ENCODE measurements at regions of chr9 and their contacts with region 1.

Region 1: DNA sequence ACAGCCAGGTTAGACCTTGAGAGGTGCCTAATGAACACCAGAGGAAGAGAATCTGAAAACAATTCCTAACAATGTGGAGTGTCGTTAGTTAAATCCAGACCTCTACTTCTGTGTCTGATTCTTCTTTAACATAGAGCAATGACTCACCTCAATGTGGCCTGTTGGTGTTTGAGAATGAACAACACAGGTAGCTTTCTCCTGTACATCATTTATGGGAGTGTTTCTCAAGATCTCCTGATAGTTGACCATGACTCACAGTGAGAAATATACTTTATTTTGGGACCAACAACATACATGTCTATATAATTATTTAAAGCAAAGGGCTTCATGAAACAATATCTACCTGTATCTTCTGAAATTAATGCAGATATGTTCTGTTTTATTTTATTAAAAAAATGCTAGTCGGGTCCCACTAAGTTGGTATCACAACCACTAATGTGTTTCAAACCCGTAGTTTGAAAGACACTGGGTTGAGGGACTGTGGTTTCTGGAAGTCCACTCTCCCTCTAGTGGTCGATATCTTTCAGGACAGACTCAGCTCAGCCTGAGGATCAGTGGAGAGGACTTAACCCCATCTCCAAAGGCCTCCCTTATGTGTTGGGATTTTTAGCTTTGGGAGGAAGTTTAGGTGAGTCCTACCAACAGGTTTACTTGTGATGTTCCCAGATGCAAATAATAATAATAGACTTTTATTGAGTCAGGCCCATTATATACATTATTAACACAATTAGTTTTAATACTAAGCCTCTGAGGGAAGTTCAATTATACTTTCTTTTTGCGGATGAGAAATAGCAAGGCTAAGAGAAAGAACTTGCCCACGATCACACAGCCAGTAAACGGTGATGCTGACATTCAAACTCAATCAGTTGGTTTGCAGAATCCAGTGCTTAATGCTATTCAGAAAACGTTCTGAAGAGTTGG is 70.0 kb upstream of the KLF9 start:
- DNase-seq: peak; percentile 86
- ATAC-seq: peak; percentile 69
- H3K4me3 ChIP-seq: no peak overlapping the region
- H3K27ac ChIP-seq: no peak overlapping the region
- H3K4me1 ChIP-seq: peaks cover 18% of the 10 kb centered on the region
- H3K27me3 ChIP-seq: no peaks in the 10 kb centered on the region
- CTCF ChIP-seq: peak; percentile 80
- POLR2A ChIP-seq: no peak
- RAD21 ChIP-seq: peak; percentile 78

Region 2: GRCh38 chr9:70291413-70291812 is 193.1 kb before region 1 on chr9:
- CTCF ChIA-PET with region 1: no interaction called
- POLR2A ChIA-PET with region 1: no interaction called
- dilution Hi-C with region 1: no loop called
- in situ Hi-C with region 1: no loop called
- intact Hi-C with region 1: no loop called
- DNase-seq: peak; percentile 28
- ATAC-seq: no peak
- H3K4me3 ChIP-seq: no peak overlapping the region
- H3K27ac ChIP-seq: no peak overlapping the region
- H3K4me1 ChIP-seq: peaks cover 9% of the 10 kb centered on the region
- H3K27me3 ChIP-seq: no peaks in the 10 kb centered on the region
- CTCF ChIP-seq: no peak
- POLR2A ChIP-seq: no peak
- RAD21 ChIP-seq: no peak

Region 3: DNA sequence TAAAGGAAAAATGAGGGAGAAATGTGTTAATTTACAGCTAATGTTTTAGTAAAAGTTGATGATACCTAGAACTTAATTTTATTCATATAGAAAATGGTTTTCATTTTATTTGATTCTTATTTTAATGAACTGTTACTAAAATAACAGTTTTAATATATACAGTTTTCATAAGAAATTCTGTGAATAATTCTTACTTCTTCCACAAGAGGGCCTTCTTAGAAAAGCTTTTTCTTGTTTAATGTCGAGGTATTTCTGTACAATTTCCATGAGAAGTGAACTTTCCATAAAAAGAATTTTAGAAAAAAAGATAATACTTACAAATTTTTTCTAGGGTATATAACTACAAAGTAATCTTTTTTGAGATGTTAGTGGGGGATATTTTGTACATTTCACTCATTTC is 143.9 kb before region 1 on chr9:
- CTCF ChIA-PET with region 1: no interaction called
- POLR2A ChIA-PET with region 1: no interaction called
- dilution Hi-C with region 1: no loop called
- in situ Hi-C with region 1: loop called (anchors 10 kb)
- intact Hi-C with region 1: loop called (anchors 5 kb)
- DNase-seq: peak; percentile 57
- ATAC-seq: no peak
- H3K4me3 ChIP-seq: no peak overlapping the region
- H3K27ac ChIP-seq: no peak overlapping the region
- H3K4me1 ChIP-seq: no peaks in the 10 kb centered on the region
- H3K27me3 ChIP-seq: no peaks in the 10 kb centered on the region
- CTCF ChIP-seq: peak; percentile 55
- POLR2A ChIP-seq: no peak
- RAD21 ChIP-seq: peak; percentile 63

Region 4: GRCh38 chr9:70352802-70353201 is 131.7 kb before region 1 on chr9:
- CTCF ChIA-PET with region 1: no interaction called
- POLR2A ChIA-PET with region 1: no interaction called
- dilution Hi-C with region 1: no loop called
- in situ Hi-C with region 1: loop called (anchors 10 kb)
- intact Hi-C with region 1: loop called (anchors 5 kb)
- DNase-seq: no peak
- ATAC-seq: no peak
- H3K4me3 ChIP-seq: no peak overlapping the region
- H3K27ac ChIP-seq: no peak overlapping the region
- H3K4me1 ChIP-seq: no peaks in the 10 kb centered on the region
- H3K27me3 ChIP-seq: no peaks in the 10 kb centered on the region
- CTCF ChIP-seq: 0 out of 2 replicates have a peak, but pooled peaks have one; percentile 24
- POLR2A ChIP-seq: no peak
- RAD21 ChIP-seq: peak; percentile 38; the same call in 1 of the 2 replicates

Region 5: DNA sequence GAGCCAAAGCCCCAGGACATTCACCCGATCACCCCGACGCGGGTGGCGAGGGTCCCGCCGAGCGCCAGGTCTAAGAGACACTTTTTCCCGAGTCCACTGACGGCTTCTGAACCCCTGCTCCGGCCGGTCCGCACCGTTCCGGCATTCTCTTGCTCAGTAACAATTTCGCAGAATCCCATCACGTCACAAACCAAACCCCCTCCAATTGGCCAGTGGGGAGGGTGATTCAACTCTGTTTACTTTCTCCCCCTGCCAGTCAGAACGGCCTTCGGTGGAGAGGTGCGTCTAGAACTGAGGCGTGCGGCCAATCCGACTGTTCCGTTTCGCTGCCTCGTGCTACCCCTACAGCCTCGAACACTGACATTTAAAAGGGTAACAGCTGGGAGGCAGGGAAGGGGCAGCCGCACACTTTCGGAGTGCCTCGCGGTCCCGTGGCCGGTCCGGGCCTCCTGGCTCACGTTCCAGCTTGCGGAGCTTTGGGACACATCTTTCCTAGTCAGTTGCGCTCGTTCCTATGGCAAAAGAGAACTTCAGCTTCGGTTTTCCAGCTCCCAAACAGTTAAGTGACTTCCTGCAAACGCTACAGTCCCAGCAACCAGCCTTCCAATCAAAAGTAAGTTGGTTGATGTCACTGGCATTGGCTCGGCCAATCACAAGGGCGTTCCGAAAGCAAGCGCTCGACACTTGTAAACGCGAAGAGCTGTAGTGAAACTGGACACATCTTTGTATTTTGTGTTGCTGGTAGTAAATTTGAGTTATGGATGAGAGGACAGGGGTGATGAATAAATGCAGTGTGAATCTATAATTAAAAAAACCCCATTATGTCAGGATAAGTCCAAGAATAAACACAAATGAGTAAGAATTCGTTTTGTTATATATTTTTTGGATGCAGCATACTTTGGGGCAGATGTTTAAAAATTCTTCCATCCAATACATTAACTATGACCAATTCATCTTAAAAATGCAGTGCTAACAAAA is 70.4 kb before region 1 on chr9 and contains the start of gene KLF9:
- CTCF ChIA-PET with region 1: interaction called, 7 read pairs
- POLR2A ChIA-PET with region 1: no interaction called
- dilution Hi-C with region 1: no loop called
- in situ Hi-C with region 1: loop called (anchors 5 kb)
- intact Hi-C with region 1: loop called (anchors 5 kb)
- DNase-seq: peak; percentile 97
- ATAC-seq: peak; percentile 83
- H3K4me3 ChIP-seq: peak within 1 kb of the TSS; percentile 85
- H3K27ac ChIP-seq: peak within 1 kb of the TSS; percentile 92
- H3K4me1 ChIP-seq: peaks cover 7% of the 10 kb centered on the region
- H3K27me3 ChIP-seq: no peaks in the 10 kb centered on the region
- CTCF ChIP-seq: 0 out of 2 replicates have a peak, but pooled peaks have one; percentile 7
- POLR2A ChIP-seq: peak; percentile 97
- RAD21 ChIP-seq: peak; percentile 7
- total RNA-seq, gene KLF9: 7.5 and 11.4 TPM in 2 replicates

Region 6: DNA sequence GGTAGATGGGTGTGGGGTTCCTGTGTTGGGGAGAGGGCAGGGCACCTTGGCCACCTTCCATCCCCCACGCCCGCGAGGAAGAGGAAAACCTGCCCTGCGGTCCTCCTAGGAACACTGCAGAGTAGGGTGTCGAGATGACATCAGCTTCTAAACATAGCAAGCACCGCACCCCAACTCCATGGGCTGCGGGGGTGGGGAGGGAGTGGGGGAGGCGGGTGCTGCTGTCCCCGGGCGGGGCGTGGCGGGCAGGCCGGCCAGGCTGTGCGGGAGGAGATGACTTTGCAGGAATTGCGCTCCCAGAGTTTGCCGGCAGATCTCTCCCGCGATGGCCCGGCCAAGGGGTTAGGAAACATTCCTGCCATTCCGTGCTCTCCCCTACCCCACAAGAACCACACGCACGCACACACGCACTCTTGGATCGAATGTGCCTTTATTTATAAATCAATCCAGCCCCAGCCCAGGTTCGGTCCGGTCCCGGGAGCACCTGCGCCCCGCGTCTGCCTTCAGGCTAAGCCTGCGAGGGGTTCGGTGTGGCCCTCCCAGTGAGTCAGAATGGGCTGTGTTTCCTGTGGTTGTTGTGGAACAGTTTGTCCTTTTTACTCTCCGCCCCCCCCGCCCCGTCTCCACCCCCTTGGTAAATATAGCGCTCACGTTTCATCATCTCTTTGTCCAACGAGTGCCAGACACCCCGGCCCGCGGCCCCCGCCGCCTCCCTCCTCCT is 64.8 kb before region 1 on chr9:
- CTCF ChIA-PET with region 1: interaction called, 7 read pairs
- POLR2A ChIA-PET with region 1: interaction called, 3 read pairs
- dilution Hi-C with region 1: no loop called
- in situ Hi-C with region 1: loop called (anchors 5 kb)
- intact Hi-C with region 1: loop called (anchors 1 kb)
- DNase-seq: peak; percentile 96
- ATAC-seq: peak; percentile 50
- H3K4me3 ChIP-seq: peak overlapping the region; percentile 58
- H3K27ac ChIP-seq: peak overlapping the region; percentile 98
- H3K4me1 ChIP-seq: peaks cover 15% of the 10 kb centered on the region
- H3K27me3 ChIP-seq: no peaks in the 10 kb centered on the region
- CTCF ChIP-seq: no peak
- POLR2A ChIP-seq: peak; percentile 95
- RAD21 ChIP-seq: peak; percentile 1

Region 7: DNA sequence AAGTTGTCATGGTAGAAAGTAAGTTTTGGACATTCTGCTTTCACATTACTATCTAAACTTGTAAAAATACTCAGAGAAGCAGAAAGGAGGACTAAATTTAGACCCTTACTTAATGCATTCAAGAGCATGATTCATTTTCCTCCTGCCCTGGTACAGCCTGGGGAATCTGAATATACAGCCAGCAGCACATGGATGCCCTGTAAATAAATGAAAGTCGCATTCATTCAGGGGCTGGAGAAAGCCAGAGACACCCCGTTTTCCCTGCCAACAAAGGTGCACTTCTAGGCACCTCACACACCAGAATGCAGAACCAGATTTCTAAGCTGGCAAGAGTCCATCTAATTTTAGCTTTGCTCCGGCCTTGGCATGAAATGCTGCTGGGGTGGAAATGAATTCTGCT is 102.7 kb after region 1 on chr9:
- CTCF ChIA-PET with region 1: no interaction called
- POLR2A ChIA-PET with region 1: no interaction called
- dilution Hi-C with region 1: no loop called
- in situ Hi-C with region 1: no loop called
- intact Hi-C with region 1: loop called (anchors 5 kb)
- DNase-seq: peak; percentile 86
- ATAC-seq: peak; percentile 72
- H3K4me3 ChIP-seq: no peak overlapping the region
- H3K27ac ChIP-seq: peak overlapping the region; percentile 80
- H3K4me1 ChIP-seq: peaks cover 26% of the 10 kb centered on the region
- H3K27me3 ChIP-seq: no peaks in the 10 kb centered on the region
- CTCF ChIP-seq: no peak
- POLR2A ChIP-seq: no peak
- RAD21 ChIP-seq: no peak

Measured in IMR-90 (cell line).